ENCODE measurements at regions of chr3 and their contacts with region 1.

Region 1: DNA sequence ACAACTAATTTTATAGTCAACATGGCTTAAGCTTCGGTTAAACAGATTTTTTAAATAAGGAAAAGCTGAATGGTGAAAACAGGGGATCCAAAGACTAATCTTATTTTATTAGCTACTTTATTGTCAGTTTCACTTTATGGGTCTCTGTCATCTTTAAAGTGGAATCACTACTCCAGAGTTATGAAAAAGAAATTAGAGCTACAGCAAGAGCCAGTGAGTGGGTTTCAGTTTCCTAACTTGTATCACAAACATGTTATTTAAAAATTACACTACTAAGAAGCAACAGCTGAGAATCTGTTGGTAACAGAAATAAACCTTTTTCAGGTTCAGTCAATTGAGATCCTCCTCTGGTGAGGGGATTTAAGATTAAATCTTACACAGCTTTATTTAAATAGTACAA is 10.0 kb downstream of the PHC3 start:
- DNase-seq: no peak
- H3K4me3 ChIP-seq: peak overlapping the region; percentile 10
- H3K27ac ChIP-seq: peak overlapping the region; percentile 45
- H3K4me1 ChIP-seq: peaks cover 40% of the 10 kb centered on the region
- CTCF ChIP-seq: no peak

Region 2: GRCh38 chr3:170154569-170155143 is 16.9 kb before region 1 on chr3:
- CTCF ChIA-PET with region 1: interaction called, 3 read pairs
- POLR2A ChIA-PET with region 1: interaction called, 52 read pairs
- intact Hi-C with region 1: no loop called
- DNase-seq: peak; percentile 90
- H3K4me3 ChIP-seq: peak overlapping the region; percentile 52
- H3K27ac ChIP-seq: peak overlapping the region; percentile 98
- H3K4me1 ChIP-seq: peaks cover 82% of the 10 kb centered on the region
- CTCF ChIP-seq: no peak

Region 3: DNA sequence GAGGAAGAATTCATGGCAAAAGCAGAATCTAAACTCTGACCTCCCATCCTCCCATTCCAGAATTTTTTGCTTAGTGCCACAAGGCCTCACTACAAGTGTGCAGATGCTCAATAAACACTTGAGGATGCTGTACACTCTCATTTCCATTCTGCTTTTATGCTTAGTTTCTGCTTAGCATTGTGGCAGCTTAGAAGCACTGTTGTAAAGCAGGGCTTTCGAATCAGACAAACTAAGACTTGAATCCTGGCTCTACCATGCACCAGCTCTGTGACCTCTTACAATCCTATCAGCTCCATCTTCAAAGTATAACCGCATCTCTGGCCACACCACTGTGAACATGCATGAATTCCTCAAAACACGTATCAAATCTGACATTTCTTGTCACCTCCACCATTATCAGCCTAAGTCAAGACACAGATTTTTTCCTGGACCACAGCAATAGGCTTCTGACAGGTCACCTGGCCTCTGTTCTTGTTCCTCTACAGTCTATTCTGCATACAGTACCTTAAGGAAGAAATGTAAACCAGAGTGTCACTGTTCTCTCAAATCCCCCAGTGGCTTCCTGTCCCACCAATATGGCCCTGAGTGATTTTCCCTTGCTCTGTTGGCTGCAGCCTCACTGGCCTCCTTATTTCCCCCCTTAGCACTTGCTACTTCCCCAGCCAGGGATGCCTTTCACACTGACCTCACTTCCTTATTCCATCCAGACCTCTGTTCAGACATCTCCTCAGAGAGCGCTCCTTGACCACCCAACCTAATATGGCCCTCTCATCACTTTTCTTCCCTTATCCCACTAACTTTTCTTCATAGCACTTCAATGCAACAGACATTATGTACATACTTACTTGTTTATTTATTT is 18.1 kb after region 1 on chr3:
- CTCF ChIA-PET with region 1: no interaction called
- POLR2A ChIA-PET with region 1: no interaction called
- intact Hi-C with region 1: no loop called
- DNase-seq: peak; percentile 13
- H3K4me3 ChIP-seq: no peak overlapping the region
- H3K27ac ChIP-seq: no peak overlapping the region
- H3K4me1 ChIP-seq: peaks cover 13% of the 10 kb centered on the region
- CTCF ChIP-seq: no peak

Region 4: DNA sequence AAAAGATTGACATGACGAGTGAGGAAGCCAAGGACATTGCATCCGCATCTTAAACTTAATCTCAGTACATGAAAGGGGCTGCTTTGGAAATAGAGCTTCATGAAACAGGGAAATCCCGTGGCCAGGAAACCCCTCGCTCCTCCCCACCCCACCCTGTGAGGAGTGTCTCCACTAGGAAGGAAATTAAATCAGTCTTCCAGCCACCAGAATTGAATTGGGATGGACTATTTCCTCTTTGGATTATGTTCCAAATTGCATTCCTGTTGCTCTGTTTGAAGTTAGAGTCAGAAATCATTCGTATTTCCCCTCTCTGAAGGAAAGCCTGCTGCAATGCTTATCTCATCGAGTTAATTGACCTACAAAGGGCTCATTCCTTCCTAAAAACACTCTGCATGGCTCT is 282.9 kb after region 1 on chr3:
- CTCF ChIA-PET with region 1: no interaction called
- POLR2A ChIA-PET with region 1: no interaction called
- intact Hi-C with region 1: no loop called
- DNase-seq: no peak
- H3K4me3 ChIP-seq: no peak overlapping the region
- H3K27ac ChIP-seq: no peak overlapping the region
- H3K4me1 ChIP-seq: no peaks in the 10 kb centered on the region
- CTCF ChIP-seq: no peak